A549 (cell line): ENCODE measurements at regions of chr13 and their contacts with region 1.

Region 1: GRCh38 chr13:113029487-113030258 is 60.7 kb downstream of the MCF2L start:
- DNase-seq: peak; percentile 8 to 21
- ATAC-seq: peak; percentile 27 to 83; a peak in 3 of 6 replicates
- H3K4me3 ChIP-seq: no peak overlapping the region
- H3K27ac ChIP-seq: no peak overlapping the region
- H3K4me1 ChIP-seq: no peaks in the 10 kb centered on the region
- CTCF ChIP-seq: peak; percentile 58
- EP300 ChIP-seq: no peak
- POLR2A ChIP-seq: no peak
- RAD21 ChIP-seq: peak; percentile 45 to 49; a peak in 4 of 5 replicates

Region 2: GRCh38 chr13:112842343-112842856 is 187.3 kb before region 1 on chr13:
- CTCF ChIA-PET with region 1: no interaction called
- POLR2A ChIA-PET with region 1: no interaction called
- DNase-seq: no peak
- ATAC-seq: no peak
- H3K4me3 ChIP-seq: no peak overlapping the region
- H3K27ac ChIP-seq: no peak overlapping the region
- H3K4me1 ChIP-seq: no peaks in the 10 kb centered on the region
- CTCF ChIP-seq: no peak
- EP300 ChIP-seq: no peak
- POLR2A ChIP-seq: no peak
- RAD21 ChIP-seq: no peak

Region 3: GRCh38 chr13:112942689-112943308 is 86.9 kb before region 1 on chr13:
- CTCF ChIA-PET with region 1: interaction called, 15 read pairs
- POLR2A ChIA-PET with region 1: no interaction called
- DNase-seq: peak; percentile 76 to 92
- ATAC-seq: peak; percentile 94 to 97
- H3K4me3 ChIP-seq: peak overlapping the region; percentile 66
- H3K27ac ChIP-seq: peak overlapping the region; percentile 60 to 88; a peak in 5 of 6 replicates
- H3K4me1 ChIP-seq: no peaks in the 10 kb centered on the region
- CTCF ChIP-seq: peak; percentile 79
- EP300 ChIP-seq: no peak
- POLR2A ChIP-seq: no peak
- RAD21 ChIP-seq: peak; percentile 76 to 86